ENCODE measurements at regions of chr16 and their contacts with region 1.

Region 1: DNA sequence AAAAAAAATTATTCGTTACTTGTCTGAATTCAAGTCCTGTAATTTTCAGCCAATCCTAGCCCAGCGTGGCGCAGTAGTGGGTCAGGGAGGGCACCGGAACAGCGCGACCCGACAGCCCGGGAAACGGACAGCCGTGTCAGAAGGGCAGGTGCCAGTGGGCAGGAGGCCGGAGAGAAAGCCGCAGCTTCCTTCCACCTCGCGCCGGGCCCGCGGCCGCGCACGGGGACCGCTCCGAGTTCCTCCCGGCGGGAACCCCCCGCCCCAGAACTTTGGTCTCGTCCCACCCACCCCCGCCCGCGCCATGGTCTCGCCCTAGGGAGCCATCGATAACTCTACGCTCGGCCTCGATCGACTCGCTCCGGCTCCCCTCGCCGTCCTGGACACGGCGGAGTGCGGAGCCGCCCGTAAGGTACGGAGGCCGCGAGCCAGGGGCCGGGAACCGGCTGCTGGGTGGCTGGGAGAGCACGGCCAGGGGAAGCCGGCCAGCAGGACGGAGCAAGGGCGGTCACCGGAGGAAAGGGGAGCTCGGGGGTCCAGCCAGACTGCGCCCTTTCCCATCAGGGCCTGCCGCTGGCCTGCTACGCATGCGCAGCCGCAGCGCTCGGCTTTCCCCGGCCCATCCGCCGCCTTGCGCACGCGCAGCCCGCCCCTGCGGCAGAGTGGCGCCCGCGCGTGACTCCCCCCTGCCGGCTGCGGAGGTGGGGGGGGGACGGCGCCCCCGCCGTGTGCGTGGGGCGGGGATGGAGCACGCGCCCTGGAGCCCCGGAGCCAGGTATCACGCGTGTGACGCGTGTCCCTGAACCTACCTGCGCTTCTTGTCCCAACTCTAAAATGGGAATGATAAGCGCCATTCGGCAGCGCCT is at the start of gene MLST8:
- DNase-seq: peak; percentile 73 to 92 (median 82)
- H3K4me3 ChIP-seq: peak within 1 kb of the TSS; percentile 64 to 98 (median 84)
- H3K27ac ChIP-seq: peak within 1 kb of the TSS; percentile 92 to 100 (median 100)
- H3K27me3 ChIP-seq: no peaks in the 10 kb centered on the region
- CTCF ChIP-seq: peak in 25 of 56 donors; percentile 4 to 49 (median 31)
- total RNA-seq, gene MLST8: 36.3 to 86.0 (median 59.4) TPM

Region 2: GRCh38 chr16:1610276-1611017 is 594.9 kb before region 1 on chr16:
- intact Hi-C with region 1: no loop called
- DNase-seq: peak; percentile 55 to 89 (median 66)
- H3K4me3 ChIP-seq: peak overlapping the region; percentile 72 to 99 (median 91)
- H3K27ac ChIP-seq: peak overlapping the region in 57 of 59 donors; percentile 23 to 91 (median 77)
- H3K27me3 ChIP-seq: no peaks in the 10 kb centered on the region
- CTCF ChIP-seq: peak in 14 of 56 donors; percentile 4 to 29 (median 14)

Region 3: GRCh38 chr16:2155091-2156021 is 50.0 kb before region 1 on chr16 and contains the start of gene TRAF7:
- intact Hi-C with region 1: loop called in 1 of 2 experiments (anchors 2 kb)
- DNase-seq: peak; percentile 95 to 100 (median 99)
- H3K4me3 ChIP-seq: peak within 1 kb of the TSS; percentile 57 to 99 (median 90)
- H3K27ac ChIP-seq: peak within 1 kb of the TSS in 57 of 59 donors; percentile 22 to 94 (median 82)
- H3K27me3 ChIP-seq: no peaks in the 10 kb centered on the region
- CTCF ChIP-seq: peak in 26 of 56 donors; percentile 7 to 67 (median 28)
- total RNA-seq, gene TRAF7: 26.2 to 67.2 (median 41.0) TPM

Region 4: DNA sequence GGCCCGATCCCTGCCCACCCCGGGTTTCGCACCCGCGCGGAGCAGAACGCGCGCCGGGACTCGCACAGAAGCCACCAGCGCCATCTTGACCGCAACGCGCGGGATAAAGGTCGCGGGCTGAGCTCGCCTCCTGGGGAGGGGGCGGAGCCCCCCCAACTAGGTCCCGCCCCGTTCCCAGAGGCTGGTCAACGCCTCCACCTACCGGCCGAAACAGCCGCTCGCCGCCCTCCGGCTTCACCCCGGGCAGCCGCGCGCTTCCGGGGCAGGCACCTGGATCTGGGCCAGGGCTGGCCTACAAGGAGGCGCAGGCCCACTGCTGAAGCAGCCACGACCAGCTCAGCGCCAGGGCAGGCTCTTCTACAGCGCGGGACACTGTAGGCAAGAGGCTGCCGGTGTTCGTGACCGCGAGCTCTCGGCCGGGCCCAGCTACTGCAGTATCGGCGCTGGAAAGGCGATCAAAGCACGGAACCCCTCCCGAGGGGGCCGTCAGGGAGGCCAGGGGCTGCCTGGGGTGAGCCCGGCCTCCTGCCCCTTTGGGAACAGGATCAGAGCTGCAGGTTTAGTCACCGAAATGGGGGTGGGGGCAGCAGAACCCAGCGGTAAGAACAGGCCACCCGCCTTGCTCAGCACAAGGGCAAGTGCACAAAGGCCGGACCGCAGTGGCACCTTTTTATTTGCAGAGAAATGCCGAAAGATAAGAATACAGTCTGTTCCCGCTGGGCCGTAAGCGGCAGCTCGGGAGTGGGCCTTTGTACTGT is 46.3 kb after region 1 on chr16 and contains the start of gene ECI1:
- intact Hi-C with region 1: loop called (anchors 5 kb)
- DNase-seq: peak; percentile 86 to 96 (median 90)
- H3K4me3 ChIP-seq: peak within 1 kb of the TSS; percentile 55 to 90 (median 74)
- H3K27ac ChIP-seq: peak within 1 kb of the TSS; percentile 44 to 97 (median 92)
- H3K27me3 ChIP-seq: no peaks in the 10 kb centered on the region
- CTCF ChIP-seq: peak; percentile 22 to 91 (median 79)
- total RNA-seq, gene ECI1: 24.9 to 65.0 (median 34.8) TPM

Region 5: GRCh38 chr16:2267913-2268666 is 62.8 kb after region 1 on chr16 and contains the start of gene RNPS1:
- intact Hi-C with region 1: loop called in 1 of 2 experiments (anchors 5 kb)
- DNase-seq: peak; percentile 90 to 97 (median 93)
- H3K4me3 ChIP-seq: peak within 1 kb of the TSS; percentile 68 to 100 (median 93)
- H3K27ac ChIP-seq: peak within 1 kb of the TSS; percentile 86 to 100 (median 97)
- H3K27me3 ChIP-seq: no peaks in the 10 kb centered on the region
- CTCF ChIP-seq: peak in 13 of 56 donors; percentile 5 to 40 (median 23)
- total RNA-seq, gene RNPS1: 162 to 285 (median 225) TPM